ENCODE measurements at regions of chr10 and their contacts with region 1.

Region 1: DNA sequence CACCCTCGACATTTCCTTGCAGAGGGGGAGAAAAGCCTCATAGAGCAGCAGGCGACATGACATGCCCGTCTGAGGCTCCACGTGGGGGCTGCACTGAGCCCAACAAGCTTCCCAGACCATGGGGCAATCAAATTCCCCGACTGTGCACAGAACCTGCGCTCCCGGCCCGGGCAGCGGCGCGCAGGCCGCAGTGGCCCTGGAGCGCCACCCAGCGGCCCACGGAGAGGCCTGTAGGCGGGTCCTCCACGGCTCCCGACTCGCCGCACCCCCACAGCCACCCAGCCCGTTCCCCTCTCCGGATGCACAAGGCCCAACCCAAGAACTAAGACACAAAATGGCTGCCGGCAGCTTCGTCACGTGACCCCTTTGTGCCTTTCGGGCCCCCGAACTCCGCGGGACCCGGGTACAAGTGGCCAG is 816 bp downstream of the EPC1 start:
- DNase-seq: peak; percentile 97
- ATAC-seq: peak; percentile 88
- H3K4me3 Mint-ChIP-seq: peak overlapping the region; percentile 89
- H3K27ac Mint-ChIP-seq: peak overlapping the region; percentile 99
- H3K4me1 Mint-ChIP-seq: peaks cover 65% of the 10 kb centered on the region
- H3K27me3 Mint-ChIP-seq: no peaks in the 10 kb centered on the region
- CTCF ChIP-seq: peak; percentile 84

Region 2: DNA sequence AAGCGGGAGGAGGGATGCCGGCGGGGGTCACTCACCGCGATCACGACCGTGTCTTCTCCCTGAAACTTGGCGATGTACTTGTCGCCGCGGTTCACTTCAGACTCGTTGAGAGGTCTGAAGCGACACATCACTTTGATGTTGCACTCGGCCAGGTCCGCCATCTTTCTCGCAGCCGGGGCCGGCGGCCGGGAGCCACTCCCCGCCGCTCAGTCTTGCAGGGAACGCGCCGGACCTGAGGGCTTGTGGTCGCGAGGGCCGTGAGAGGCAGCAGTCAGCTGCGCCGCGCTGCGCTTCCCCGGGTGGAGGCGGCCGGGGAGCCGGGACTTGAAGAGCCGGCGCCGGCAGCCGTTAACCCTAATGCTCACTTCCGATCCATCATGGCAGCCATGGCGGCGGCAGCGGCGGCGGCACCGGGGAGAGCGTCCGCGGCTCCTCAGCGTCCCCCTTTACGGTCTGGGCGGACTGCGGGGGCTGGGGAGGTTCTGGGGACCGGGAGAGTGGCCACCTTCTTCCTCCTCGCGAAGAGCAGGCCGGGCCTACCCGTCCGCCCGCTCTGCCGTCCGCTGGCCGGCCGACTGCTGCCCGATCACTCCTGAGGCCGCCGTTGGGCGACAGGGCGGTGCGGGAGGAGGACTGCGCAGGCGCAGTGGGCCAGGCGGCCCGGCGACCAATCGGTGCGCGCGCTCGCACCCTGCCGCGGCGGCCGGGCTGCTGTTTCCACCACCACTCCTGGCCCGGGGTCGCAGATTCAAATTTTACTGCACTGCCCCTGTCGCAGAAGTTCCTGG is 290.1 kb before region 1 on chr10 and contains the start of gene KIF5B:
- CTCF ChIA-PET with region 1: no interaction called
- POLR2A ChIA-PET with region 1: no interaction called
- intact Hi-C with region 1: loop called (anchors 10 kb)
- DNase-seq: peak; percentile 84
- ATAC-seq: peak; percentile 88
- H3K4me3 Mint-ChIP-seq: peak within 1 kb of the TSS; percentile 97
- H3K27ac Mint-ChIP-seq: peak within 1 kb of the TSS; percentile 94
- H3K4me1 Mint-ChIP-seq: peaks cover 33% of the 10 kb centered on the region
- H3K27me3 Mint-ChIP-seq: no peaks in the 10 kb centered on the region
- CTCF ChIP-seq: no peak
- total RNA-seq, gene KIF5B: 52.7 to 55.3 TPM

Region 3: DNA sequence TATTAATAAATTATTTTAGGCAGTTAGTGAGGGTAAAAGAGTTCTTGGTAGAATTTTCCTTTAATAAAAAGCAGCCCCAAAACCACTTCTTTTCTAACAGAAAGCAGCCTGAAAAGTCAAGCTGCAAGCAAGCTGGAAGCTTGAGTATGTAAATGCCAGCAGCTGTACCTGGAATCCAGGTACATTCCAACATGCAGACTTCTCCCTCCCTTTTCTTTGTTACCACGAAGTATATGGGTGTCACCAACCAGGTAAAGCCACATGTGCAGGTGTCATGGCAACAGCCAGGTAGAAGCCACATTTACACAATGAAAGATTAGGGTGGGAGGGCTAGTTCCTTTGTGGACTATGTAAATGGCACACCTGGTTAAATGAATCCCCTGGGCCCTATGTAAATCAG is 113.8 kb before region 1 on chr10:
- CTCF ChIA-PET with region 1: no interaction called
- POLR2A ChIA-PET with region 1: no interaction called
- intact Hi-C with region 1: no loop called
- DNase-seq: no peak
- ATAC-seq: no peak
- H3K4me3 Mint-ChIP-seq: no peak overlapping the region
- H3K27ac Mint-ChIP-seq: no peak overlapping the region
- H3K4me1 Mint-ChIP-seq: no peaks in the 10 kb centered on the region
- H3K27me3 Mint-ChIP-seq: no peaks in the 10 kb centered on the region
- CTCF ChIP-seq: no peak

Region 4: DNA sequence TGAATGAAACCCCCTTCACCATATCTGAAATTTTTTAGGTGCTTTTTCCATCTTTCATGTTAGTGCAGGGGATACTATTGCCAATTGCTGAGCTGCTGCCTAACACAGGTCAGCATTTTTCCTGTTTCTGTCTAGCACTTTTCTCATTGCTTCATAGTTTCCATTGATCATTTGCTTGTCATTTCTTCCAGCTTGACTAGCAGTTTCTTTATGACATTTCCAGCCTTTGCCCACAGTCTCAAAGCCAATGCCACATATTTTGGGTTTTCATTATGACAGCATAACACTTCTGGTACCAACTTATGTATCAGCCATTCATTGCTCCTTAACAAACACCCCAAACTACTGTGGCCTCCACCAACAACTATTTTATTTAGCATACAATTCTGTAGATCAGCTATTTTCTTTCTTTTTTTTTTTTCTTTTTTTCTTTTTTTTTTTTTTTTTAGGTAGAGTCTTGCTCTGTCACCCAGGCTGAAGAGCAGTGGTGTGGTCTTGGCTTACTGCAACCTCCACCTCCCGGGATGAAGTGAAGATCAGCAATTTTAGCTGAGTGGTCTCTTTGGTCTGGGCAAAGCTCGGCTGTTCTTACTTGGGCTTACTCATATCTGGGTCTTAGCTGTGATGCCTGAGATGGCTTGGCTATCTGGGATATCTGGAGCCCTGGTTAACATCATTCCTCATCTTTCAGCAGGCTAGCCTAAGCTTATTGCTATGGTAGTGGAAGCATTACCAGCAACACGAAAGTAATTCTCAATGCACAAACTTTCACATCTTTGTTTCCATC is 101.5 kb before region 1 on chr10:
- CTCF ChIA-PET with region 1: interaction called, 3 read pairs
- POLR2A ChIA-PET with region 1: interaction called, 11 read pairs
- intact Hi-C with region 1: no loop called
- DNase-seq: peak; percentile 65
- ATAC-seq: peak; percentile 95
- H3K4me3 Mint-ChIP-seq: peak overlapping the region; percentile 31
- H3K27ac Mint-ChIP-seq: peak overlapping the region; percentile 88
- H3K4me1 Mint-ChIP-seq: peaks cover 21% of the 10 kb centered on the region
- H3K27me3 Mint-ChIP-seq: peaks cover 4% of the 10 kb centered on the region
- CTCF ChIP-seq: no peak

Region 5: GRCh38 chr10:32332299-32332750 is 13.8 kb before region 1 on chr10:
- CTCF ChIA-PET with region 1: interaction called, 17 read pairs
- POLR2A ChIA-PET with region 1: interaction called, 50 read pairs
- intact Hi-C with region 1: no loop called
- DNase-seq: peak; percentile 91
- ATAC-seq: peak; percentile 97
- H3K4me3 Mint-ChIP-seq: peak overlapping the region; percentile 73
- H3K27ac Mint-ChIP-seq: peak overlapping the region; percentile 96
- H3K4me1 Mint-ChIP-seq: peaks cover 89% of the 10 kb centered on the region
- H3K27me3 Mint-ChIP-seq: no peaks in the 10 kb centered on the region
- CTCF ChIP-seq: no peak

Region 6: DNA sequence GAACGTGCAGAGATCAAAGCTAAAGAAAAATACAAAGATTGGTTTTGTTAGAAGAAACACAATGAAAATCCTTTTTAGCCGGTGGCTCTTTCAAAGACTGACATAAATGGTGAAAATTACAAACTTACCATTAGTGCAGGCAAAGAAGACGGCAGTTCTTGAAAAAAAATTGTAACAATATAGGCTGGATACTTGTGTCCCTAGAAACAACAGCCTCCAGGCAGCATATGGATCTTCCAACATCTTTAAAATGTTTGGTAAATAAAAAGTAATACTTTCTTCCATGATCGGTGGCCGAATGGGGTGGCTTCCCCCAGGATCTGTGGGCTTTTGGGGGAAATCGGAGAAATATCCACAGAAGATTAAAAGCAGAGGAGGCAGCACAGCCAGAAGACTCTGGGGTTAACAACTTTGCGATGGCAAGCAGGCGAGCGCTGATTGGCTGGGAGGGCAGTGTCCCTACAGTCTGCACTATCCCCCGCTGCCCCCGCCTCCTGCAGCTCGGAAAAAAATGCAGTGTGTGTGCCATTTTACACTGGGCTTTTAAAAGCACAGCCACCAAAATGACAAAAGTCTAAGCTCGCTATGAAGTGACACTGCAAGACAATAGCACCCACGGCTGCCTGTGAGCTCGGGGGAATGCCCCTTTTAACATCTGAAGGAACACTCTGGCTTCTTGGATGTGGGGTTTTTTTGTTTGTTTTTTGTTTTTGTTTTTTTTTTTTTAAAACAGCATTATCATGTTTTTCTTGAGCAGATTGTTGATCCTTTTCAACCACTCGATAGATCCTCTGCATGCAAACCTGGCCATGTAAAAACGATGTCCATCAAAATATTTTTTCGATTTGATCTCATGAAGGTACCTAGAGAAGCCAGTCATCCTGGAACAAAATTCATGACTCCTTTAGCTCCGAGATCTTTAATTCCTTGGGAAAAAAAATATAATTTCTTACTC is 32.5 kb after region 1 on chr10:
- CTCF ChIA-PET with region 1: interaction called, 4 read pairs
- POLR2A ChIA-PET with region 1: interaction called, 18 read pairs
- intact Hi-C with region 1: no loop called
- DNase-seq: peak; percentile 98
- ATAC-seq: peak; percentile 95
- H3K4me3 Mint-ChIP-seq: no peak overlapping the region
- H3K27ac Mint-ChIP-seq: no peak overlapping the region
- H3K4me1 Mint-ChIP-seq: peaks cover 21% of the 10 kb centered on the region
- H3K27me3 Mint-ChIP-seq: no peaks in the 10 kb centered on the region
- CTCF ChIP-seq: no peak